ENCODE measurements at regions of chr1 and their contacts with region 1.

Region 1: GRCh38 chr1:157090196-157090647 is 9.4 kb downstream of the ETV3L start:
- DNase-seq: peak; percentile 87
- CTCF ChIP-seq: peak; percentile 91

Region 2: GRCh38 chr1:156866249-156866909 is 223.8 kb before region 1 on chr1:
- CTCF ChIA-PET with region 1: no interaction called
- POLR2A ChIA-PET with region 1: no interaction called
- DNase-seq: no peak
- CTCF ChIP-seq: no peak

Region 3: DNA sequence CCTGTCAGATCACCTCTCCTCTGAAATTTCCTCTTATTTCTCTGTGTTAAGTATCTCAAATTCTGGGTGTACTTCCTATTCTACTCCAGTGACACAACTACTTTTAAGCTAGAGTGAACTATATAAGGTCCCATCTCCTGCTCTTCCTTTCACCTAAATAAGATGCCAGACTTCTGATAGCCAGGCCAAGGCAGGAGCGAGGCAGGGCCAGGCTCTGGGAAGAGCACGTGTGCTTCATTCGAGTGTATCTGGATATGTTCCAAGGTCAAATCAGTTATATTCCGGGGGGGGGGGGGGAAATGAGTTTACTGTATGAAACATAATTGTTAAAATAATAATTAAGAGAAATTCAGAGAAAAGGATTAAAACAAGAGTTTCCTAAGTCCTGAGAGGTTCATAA is 109.7 kb before region 1 on chr1:
- CTCF ChIA-PET with region 1: no interaction called
- POLR2A ChIA-PET with region 1: no interaction called
- DNase-seq: no peak
- CTCF ChIP-seq: no peak

Region 4: GRCh38 chr1:157105988-157106812 is 16.0 kb after region 1 on chr1:
- CTCF ChIA-PET with region 1: interaction called, 72 read pairs
- POLR2A ChIA-PET with region 1: no interaction called
- DNase-seq: peak; percentile 87
- CTCF ChIP-seq: no peak

Region 5: DNA sequence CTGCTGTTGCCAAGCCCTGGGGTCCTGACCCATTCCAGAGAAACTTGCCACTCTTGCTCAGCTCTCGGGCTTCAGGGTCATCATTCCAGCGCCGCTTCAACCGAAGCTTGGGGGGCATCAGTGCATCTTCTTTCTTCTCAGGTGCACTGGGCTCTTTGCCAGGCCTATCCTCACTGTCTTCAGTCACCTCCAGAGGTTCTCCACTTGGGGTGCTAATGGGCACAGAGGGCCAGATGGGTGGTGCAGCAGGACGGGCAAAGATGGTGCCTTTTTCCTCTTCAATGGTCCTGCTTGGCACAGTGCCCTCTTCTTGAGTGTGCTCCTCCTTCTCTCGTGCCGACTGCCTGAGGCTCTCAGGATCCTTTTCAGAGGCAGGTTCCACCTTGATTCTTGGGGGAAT is 34.6 kb after region 1 on chr1:
- CTCF ChIA-PET with region 1: interaction called, 22 read pairs
- POLR2A ChIA-PET with region 1: no interaction called
- DNase-seq: no peak
- CTCF ChIP-seq: no peak

Region 6: GRCh38 chr1:157138220-157139051 is 48.2 kb after region 1 on chr1 and contains the start of gene ETV3:
- CTCF ChIA-PET with region 1: interaction called, 43 read pairs
- POLR2A ChIA-PET with region 1: no interaction called
- DNase-seq: peak; percentile 93
- CTCF ChIP-seq: no peak

Region 7: GRCh38 chr1:157163273-157164127 is 73.3 kb after region 1 on chr1:
- CTCF ChIA-PET with region 1: interaction called, 567 read pairs
- POLR2A ChIA-PET with region 1: no interaction called
- DNase-seq: peak; percentile 80
- CTCF ChIP-seq: peak; percentile 99

Measured in GM10248 (cell line).